PC-3 (cell line): ENCODE measurements at regions of chr18 and their contacts with region 1.

Region 1: GRCh38 chr18:43571078-43571689 is 293.9 kb upstream of the SYT4 start:
- DNase-seq: peak; percentile 59
- ATAC-seq: no peak
- H3K4me3 ChIP-seq: no peak overlapping the region
- H3K27ac ChIP-seq: no peak overlapping the region
- H3K4me1 ChIP-seq: no peaks in the 10 kb centered on the region
- H3K27me3 ChIP-seq: no peaks in the 10 kb centered on the region
- CTCF ChIP-seq: peak; percentile 65

Region 2: DNA sequence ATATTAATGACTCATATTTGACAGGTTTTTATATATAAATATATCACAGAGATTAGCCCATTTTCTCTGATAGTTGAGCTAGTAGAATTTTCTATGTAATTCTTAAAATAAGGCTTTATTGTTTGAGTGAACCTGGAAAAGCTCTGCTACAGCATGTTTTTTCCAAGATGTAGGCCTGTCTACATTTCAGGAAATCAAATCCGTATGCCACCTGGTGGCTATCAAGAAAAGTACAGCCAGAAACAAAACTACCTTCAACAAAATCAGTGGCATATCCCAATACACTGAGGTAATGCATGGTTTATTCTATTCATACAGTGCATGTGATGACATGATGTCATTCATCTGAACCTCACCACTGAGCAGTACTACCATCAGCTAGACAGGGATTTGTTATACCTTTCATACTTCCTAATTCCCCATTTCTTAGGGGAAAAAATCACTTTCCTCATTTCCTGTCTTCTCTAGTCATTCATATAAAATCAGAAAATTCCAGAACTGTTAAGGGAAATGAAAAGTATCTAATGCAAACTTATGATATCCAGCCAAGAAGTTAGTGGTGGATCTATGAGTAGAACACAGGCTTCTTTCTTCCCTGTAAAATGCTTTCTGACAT is 16.5 kb after region 1 on chr18:
- CTCF ChIA-PET with region 1: interaction called, 13 read pairs
- POLR2A ChIA-PET with region 1: no interaction called
- intact Hi-C with region 1: loop called (anchors 1 kb)
- DNase-seq: peak; percentile 34
- ATAC-seq: peak; percentile 70
- H3K4me3 ChIP-seq: no peak overlapping the region
- H3K27ac ChIP-seq: no peak overlapping the region
- H3K4me1 ChIP-seq: peaks cover 4% of the 10 kb centered on the region; the same call in 1 of the 2 replicates
- H3K27me3 ChIP-seq: no peaks in the 10 kb centered on the region; the same call in 1 of the 2 replicates
- CTCF ChIP-seq: peak; percentile 51; the same call in 1 of the 2 replicates

Region 3: GRCh38 chr18:43596105-43596712 is 25.0 kb after region 1 on chr18:
- CTCF ChIA-PET with region 1: interaction called, 3 read pairs
- POLR2A ChIA-PET with region 1: no interaction called
- intact Hi-C with region 1: loop called (anchors 2 kb)
- DNase-seq: peak; percentile 42
- ATAC-seq: peak; percentile 69
- H3K4me3 ChIP-seq: no peak overlapping the region
- H3K27ac ChIP-seq: no peak overlapping the region
- H3K4me1 ChIP-seq: no peaks in the 10 kb centered on the region
- H3K27me3 ChIP-seq: no peaks in the 10 kb centered on the region
- CTCF ChIP-seq: peak; percentile 51

Region 4: DNA sequence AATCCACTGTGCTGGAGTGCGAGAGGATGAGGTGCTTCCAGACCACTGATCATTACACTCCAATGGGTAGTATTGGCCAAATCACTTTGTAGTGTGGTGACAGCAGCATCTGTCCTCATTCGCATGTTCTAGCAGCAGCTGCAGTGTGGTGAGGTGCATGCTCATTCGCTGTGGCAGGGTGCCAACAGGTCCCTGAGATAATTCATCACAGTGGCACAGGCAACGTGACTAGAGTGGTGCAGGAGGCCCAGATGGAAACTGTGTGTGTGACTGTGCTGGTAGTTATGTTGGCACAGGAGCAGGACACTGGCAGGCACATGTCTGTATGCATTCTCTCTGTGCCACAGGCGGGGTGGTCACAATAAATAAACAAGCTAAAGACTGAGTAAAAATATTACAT is 35.6 kb after region 1 on chr18:
- CTCF ChIA-PET with region 1: no interaction called
- POLR2A ChIA-PET with region 1: no interaction called
- intact Hi-C with region 1: no loop called
- DNase-seq: no peak
- ATAC-seq: no peak
- H3K4me3 ChIP-seq: no peak overlapping the region
- H3K27ac ChIP-seq: no peak overlapping the region
- H3K4me1 ChIP-seq: no peaks in the 10 kb centered on the region
- H3K27me3 ChIP-seq: no peaks in the 10 kb centered on the region
- CTCF ChIP-seq: no peak